MCF 10A (cell line): ENCODE measurements at regions of chr5 and their contacts with region 1.

Region 1: DNA sequence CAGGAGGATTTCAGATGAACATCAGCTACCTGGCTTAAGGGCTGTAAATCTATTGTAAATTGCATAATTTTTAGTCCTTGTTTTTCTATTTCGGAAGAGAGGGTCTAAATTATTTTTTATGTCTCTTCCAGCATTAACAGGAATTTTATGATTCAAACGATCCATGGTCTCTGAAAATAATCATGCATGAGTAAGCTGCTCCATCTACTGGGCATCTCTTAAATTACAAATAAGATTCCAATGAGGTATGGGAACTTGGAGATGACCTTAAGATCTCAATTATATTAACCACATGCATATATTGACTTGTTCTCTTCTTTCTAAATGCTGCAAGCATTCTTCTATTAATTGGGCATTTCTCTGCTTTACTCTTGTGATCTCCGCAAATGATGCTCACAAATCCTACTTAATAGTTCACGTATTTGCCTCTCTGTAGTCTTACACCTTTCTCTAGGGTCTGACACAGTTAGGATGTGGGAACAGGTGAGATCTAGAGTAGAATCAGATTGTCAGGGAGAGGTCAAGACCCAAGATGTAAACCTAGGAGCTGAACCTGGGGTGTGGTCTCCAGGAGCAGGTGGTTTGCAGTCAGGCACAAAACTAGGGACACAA is 86.9 kb downstream of the NUDT12 start:
- DNase-seq: peak; percentile 59
- H3K4me3 Mint-ChIP-seq: no peak overlapping the region
- H3K27ac Mint-ChIP-seq: no peak overlapping the region
- H3K4me1 Mint-ChIP-seq: no peaks in the 10 kb centered on the region
- H3K27me3 Mint-ChIP-seq: peaks cover 13% of the 10 kb centered on the region
- CTCF ChIP-seq: peak; percentile 66

Region 2: GRCh38 chr5:102583276-102584124 is 892.2 kb before region 1 on chr5:
- CTCF ChIA-PET with region 1: no interaction called
- POLR2A ChIA-PET with region 1: no interaction called
- intact Hi-C with region 1: loop called (anchors 1 kb)
- DNase-seq: peak; percentile 35
- H3K4me3 Mint-ChIP-seq: no peak overlapping the region
- H3K27ac Mint-ChIP-seq: no peak overlapping the region
- H3K4me1 Mint-ChIP-seq: no peaks in the 10 kb centered on the region
- H3K27me3 Mint-ChIP-seq: no peaks in the 10 kb centered on the region
- CTCF ChIP-seq: peak; percentile 50

Region 3: DNA sequence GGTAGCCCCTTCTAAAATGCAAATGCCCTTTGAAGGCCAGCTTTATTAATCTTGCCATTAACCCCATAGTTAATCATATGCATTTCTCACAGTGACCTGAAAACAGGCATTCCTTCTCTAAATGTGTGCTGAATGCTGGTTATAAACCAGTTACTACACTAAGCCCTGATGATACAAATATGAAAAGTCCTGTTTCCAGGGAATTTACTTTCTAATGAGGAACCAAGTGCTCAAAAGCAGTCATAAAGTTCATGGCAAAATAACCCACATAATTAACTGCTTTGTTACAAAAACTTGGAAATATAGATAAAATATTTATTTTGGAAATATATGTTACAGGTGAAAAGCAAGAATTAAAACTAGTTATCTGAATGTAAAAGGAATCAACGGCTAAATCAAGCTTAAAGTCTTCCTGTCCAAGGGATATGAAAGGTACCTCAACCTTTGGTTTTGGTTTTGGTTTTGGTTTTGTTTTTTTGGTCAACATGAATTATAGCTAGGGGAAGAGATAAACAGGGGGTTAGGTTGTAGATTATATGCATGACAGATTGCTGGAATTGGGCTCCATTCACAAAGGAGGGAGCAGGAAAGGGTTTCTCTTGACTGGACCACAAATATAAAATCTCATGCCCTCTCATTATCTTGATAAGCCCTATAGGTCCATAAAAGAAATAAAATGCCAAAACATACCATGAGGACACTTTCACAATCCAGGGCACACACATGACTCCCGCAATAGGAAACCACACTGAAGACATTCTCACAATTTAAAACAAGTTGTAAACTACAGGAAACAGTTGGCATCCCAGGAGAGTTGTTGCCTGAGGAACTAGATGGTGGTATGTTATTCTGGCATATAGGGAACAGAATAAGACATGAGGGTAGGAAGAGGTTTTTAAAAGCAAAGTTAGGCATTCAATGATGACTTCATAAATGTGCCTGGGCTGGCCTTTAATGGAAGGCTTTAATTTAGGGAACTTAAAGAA is 263.9 kb before region 1 on chr5:
- CTCF ChIA-PET with region 1: interaction called, 10 read pairs
- POLR2A ChIA-PET with region 1: interaction called, 3 read pairs
- intact Hi-C with region 1: no loop called
- DNase-seq: no peak
- H3K4me3 Mint-ChIP-seq: no peak overlapping the region
- H3K27ac Mint-ChIP-seq: peak overlapping the region; percentile 67
- H3K4me1 Mint-ChIP-seq: peaks cover 5% of the 10 kb centered on the region
- H3K27me3 Mint-ChIP-seq: no peaks in the 10 kb centered on the region
- CTCF ChIP-seq: no peak

Region 4: DNA sequence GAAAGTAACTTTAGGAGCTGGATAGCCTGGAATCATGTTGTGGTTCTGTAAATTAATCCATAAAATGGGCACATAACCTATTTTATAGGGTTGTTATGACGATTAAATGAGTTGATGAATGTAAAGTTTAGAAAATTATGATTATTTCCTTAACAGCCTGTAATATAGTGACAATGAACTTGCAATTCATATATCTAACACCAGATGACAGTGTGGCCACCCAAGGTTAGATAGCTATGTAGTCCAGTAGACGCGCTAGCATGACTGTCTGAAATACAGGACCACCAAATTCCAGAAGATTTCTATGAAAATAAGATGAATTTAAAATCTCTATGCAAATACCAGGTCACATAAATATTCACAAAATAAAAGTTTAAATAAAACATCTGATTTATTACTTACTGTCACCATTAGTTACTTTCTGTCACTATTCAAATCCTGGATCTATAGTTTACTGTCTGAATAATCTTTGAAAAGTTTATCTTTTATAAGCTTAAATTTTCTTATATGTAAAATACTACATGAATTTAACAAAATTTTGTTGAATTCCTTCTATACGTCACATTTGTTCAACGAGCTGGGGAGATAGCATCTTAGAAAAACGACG is 243.2 kb before region 1 on chr5:
- CTCF ChIA-PET with region 1: interaction called, 85 read pairs
- POLR2A ChIA-PET with region 1: interaction called, 8 read pairs
- intact Hi-C with region 1: loop called (anchors 1 kb)
- DNase-seq: peak; percentile 50
- H3K4me3 Mint-ChIP-seq: no peak overlapping the region
- H3K27ac Mint-ChIP-seq: no peak overlapping the region
- H3K4me1 Mint-ChIP-seq: peaks cover 5% of the 10 kb centered on the region
- H3K27me3 Mint-ChIP-seq: peaks cover 2% of the 10 kb centered on the region
- CTCF ChIP-seq: peak; percentile 79

Region 5: DNA sequence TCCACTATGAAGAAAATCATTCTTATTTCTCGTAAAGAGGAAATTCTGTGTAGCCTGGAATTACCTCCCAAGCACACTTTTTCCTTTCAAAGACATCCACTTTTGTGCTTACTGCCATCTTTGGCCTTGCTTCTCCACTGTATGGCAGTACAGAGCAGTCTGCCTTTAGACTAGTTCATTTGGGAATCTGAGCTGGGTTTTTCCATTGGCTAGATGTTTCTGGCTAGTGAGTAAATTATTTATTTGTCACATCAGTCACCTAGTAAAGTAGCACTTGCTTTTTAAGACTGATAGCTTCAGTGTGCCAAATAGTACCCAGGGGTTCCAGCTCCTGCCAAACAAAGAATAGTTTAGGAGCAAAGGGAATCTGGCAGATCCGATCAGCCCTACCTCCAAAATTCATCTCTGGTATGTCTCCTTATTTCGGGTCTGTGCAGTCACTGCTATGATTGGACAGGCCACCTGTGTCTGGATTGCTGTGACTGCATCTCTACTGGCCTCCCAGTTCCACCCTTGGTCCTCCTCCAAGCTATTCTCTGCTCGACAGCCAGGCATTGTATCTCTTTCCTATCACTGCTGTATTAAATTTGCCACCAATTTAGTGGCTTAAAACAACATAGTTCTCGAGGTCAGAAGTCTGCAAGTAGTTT is 10.8 kb before region 1 on chr5:
- CTCF ChIA-PET with region 1: interaction called, 24 read pairs
- POLR2A ChIA-PET with region 1: interaction called, 3 read pairs
- intact Hi-C with region 1: no loop called
- DNase-seq: no peak
- H3K4me3 Mint-ChIP-seq: no peak overlapping the region
- H3K27ac Mint-ChIP-seq: no peak overlapping the region
- H3K4me1 Mint-ChIP-seq: peaks cover 5% of the 10 kb centered on the region
- H3K27me3 Mint-ChIP-seq: no peaks in the 10 kb centered on the region
- CTCF ChIP-seq: no peak